ENCODE measurements at regions of chr17 and their contacts with region 1.

Region 1: DNA sequence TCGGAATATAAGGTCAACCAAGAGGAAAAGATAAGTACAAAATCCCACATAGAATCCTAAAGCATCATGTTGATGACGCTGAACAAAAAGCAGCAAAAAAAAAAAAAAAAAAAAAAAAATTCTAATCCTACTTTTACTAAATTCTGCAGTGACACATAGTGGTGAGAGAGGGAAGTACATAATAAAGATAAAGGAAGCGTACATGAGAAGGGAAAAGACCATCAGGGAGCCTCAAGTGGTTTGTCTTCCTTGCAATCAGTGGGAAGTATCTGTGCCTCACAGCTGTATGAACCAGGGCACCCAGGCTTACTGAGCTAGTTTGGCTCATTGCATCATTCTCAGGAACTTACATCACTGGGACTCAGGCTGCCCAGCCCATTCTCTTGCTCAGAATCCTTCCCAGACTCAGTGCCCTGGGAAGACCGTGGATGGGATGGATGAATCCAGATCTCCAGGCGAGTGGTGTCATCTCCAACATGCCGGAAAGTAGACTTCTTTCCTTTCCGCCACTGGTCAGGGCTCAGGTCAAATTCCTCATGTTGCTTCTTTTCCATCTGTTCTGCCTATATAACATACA is 21.2 kb downstream of the SMG6 start:
- DNase-seq: no peak
- H3K4me3 ChIP-seq: no peak overlapping the region
- H3K27ac ChIP-seq: peak overlapping the region; percentile 36 to 47 (median 42)
- H3K4me1 ChIP-seq: no peaks in the 10 kb centered on the region
- H3K27me3 ChIP-seq: no peaks in the 10 kb centered on the region
- CTCF ChIP-seq: peak; percentile 47 to 59 (median 51)
- EP300 ChIP-seq: no peak
- POLR2A ChIP-seq: no peak

Region 2: DNA sequence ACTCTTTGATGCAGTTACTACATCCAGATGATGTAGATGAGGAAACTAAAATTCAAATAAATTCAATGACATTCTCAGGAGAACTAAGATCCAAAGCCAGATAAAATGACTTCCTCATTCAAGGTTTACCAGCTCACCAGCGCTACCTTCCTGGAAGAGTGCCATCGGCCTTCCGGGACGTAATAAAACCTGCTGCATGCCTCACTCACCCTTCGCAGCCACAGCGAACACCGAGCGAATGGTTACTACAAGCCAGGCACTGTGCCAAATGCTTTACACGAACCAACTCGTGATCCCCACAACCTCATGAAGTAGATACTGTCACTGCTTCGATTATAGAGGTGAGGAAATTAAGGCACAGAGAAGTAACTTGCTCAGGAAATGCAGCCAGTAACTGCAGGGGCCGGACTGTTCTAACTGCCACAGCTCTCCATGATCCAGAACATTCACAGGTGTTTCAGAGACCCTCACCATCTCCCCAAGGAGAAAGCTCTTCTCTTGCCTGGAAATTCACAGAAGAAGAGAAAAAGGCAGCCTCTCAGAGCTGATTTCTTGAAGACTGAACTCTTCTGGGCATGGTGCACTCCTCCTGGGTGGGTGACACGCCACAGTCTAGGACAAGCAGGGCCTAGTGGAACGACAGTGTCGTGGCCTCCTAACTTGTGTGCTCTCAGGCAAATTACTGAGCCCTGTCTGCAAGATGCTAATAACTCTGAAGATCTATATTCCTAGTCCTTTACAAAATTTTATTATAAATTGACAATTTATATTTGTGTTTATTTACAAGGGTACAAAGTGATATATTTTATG is 180.7 kb before region 1 on chr17:
- intact Hi-C with region 1: loop called (anchors 5 kb)
- DNase-seq: no peak
- H3K4me3 ChIP-seq: no peak overlapping the region
- H3K27ac ChIP-seq: peak overlapping the region in 2 of 4 donors; percentile 33 to 37
- H3K4me1 ChIP-seq: peaks cover 0 to 33% (median 20%) of the 10 kb centered on the region in 4 donors
- H3K27me3 ChIP-seq: no peaks in the 10 kb centered on the region
- CTCF ChIP-seq: no peak
- EP300 ChIP-seq: no peak
- POLR2A ChIP-seq: no peak

Region 3: DNA sequence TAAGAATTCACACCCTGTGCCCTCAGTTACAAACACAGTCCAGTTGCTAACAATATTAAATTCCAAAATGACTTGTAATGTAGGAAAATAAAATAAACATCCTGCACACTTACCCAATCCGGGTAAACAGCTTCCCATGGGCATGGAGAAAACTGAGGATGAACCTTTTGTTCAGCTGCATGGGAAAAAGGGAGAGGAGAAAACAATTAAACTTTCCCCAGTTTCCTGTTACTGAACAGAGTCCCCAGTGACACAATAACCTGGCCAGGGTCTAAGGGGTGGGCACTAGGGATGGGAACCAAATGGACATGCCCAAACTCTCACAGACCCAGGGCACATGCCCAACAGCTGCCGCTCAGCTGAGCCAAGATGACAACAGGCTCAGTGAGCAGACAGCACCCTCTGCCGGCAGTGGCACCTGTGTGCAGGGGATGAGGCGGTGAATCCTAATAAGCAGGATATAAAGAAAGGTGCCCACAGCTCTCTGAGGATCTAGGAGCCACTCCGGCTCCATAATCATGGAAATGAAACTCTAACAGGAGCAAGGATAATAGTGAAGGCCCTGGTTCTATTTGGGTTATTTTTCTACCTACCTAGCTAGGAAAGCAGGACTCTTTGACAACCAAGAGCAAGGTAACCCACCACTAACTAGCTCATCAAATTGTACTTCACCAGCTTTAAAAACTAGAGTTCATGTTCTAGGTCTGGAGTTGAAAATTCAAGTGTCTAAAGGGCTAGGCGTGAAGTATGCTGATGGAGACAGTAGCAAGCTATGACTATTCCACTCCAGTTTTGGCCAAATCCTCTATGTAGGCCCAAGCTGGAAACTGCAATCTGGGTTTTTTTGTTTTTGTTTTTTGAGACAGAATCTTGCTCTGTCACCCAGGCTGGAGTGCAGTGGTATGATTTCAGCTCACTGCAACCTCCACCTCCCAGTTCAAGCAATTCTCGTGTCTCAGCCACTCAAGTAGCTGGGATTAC is 37.5 kb before region 1 on chr17:
- intact Hi-C with region 1: loop called (anchors 5 kb)
- DNase-seq: peak; percentile 94
- H3K4me3 ChIP-seq: no peak overlapping the region
- H3K27ac ChIP-seq: peak overlapping the region; percentile 63 to 75 (median 68)
- H3K4me1 ChIP-seq: peaks cover 0 to 17% (median 16%) of the 10 kb centered on the region in 4 donors
- H3K27me3 ChIP-seq: no peaks in the 10 kb centered on the region
- CTCF ChIP-seq: peak; percentile 96 to 98 (median 97)
- EP300 ChIP-seq: no peak
- POLR2A ChIP-seq: no peak

Region 4: GRCh38 chr17:2416010-2416734 is 133.8 kb after region 1 on chr17:
- intact Hi-C with region 1: no loop called
- DNase-seq: peak; percentile 96
- H3K4me3 ChIP-seq: no peak overlapping the region
- H3K27ac ChIP-seq: peak overlapping the region; percentile 39 to 80 (median 61)
- H3K4me1 ChIP-seq: peaks cover 0 to 49% (median 25%) of the 10 kb centered on the region in 4 donors
- H3K27me3 ChIP-seq: no peaks in the 10 kb centered on the region
- CTCF ChIP-seq: peak; percentile 93 to 97 (median 95)
- EP300 ChIP-seq: no peak
- POLR2A ChIP-seq: no peak

Measured in sigmoid colon (tissue), 7 donors.